MCF 10A (cell line): ENCODE measurements at regions of chr4 and their contacts with region 1.

Region 1: DNA sequence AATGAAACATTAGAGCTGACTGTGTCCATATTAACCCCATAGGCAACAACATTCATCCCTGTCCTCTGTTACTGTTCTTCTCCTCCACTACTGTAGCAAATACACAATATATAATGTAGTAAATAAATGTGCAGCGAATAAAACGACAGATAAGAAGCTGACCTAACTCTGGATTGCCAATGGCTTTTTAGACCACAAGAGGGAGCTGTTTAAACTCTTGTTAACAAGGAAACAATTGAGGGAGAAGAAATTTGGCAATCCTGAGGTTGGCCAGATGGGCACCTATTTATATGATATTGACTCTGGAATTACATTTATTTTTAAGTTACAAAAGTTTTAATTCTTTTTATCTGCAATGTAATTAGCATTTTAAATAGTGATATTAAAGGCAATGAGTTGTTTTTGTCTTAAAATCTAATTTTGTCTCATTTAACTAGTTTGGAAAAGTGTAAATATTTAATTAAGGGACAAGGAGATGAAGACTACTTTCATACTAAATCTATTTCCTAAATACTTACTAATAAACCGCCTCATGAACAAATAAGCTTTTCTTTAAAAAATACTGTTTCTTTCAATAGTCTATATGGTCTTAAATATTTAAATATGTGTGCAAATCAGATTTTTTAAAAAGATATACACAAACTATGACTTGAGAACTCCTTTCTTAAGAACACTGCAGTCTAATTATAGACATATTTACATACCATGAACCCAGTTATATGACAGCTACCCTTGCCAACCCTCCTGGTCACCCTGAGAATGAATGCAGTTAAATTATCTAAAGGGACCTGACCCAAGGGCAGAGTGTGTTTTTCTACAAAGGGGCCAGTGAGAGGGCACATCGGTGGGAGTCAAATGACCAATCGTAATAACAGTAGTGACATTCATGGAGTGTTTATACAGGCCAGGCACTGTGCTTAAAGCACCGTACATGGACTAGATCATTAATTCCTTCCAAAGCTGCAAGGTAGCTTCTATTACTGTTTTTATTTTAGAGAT is 52.9 kb upstream of the HPF1 start:
- DNase-seq: peak; percentile 86
- H3K4me3 Mint-ChIP-seq: no peak overlapping the region
- H3K27ac Mint-ChIP-seq: no peak overlapping the region
- H3K4me1 Mint-ChIP-seq: no peaks in the 10 kb centered on the region
- H3K27me3 Mint-ChIP-seq: no peaks in the 10 kb centered on the region
- CTCF ChIP-seq: peak; percentile 64

Region 2: DNA sequence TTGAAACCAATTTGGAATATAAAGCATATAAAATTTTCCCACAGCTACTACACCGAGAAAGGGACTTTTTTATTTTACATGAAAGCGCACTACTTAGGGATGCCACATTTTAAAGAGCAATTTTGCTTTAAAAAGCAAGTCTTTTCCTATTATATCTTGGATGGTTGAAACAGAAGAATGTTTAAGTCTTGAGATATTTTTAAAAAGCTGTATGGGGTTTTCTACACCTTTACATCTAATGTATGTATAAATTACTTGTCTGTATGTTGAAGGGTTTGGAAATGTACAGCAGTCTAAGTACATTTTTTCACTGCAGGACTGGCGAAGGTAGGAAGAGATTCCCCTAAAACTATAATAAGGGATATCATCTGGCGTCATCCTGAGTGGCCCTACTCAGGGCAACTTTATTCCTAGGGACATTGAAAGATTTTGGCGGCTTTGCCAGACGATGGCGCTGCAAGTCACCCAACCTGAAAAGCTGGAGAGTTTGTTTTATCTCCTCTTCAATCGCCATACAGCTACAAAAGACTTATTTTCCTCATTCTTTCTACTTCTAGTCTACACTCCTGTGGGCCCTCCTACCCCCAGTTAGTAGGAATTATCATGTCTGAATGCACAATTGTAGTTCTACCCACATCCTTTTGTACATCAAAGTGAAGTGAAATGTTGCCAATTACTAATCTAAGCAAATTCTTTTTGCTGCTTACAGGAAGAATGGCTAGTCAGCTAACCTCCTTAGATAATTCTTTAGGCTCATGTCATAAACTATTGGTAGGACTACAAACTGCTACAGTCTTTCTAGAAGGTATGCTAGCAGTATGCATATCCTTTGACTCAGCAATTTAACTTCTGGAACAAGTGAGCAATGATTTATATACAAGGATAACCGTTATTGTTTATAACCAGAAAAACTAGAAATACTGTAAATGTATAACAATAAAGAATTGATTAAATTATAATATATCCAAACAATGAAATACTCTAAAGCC is 197.5 kb before region 1 on chr4:
- CTCF ChIA-PET with region 1: interaction called, 10 read pairs
- POLR2A ChIA-PET with region 1: no interaction called
- intact Hi-C with region 1: loop called (anchors 1 kb)
- DNase-seq: peak; percentile 81
- H3K4me3 Mint-ChIP-seq: peak overlapping the region; percentile 98
- H3K27ac Mint-ChIP-seq: peak overlapping the region; percentile 98
- H3K4me1 Mint-ChIP-seq: peaks cover 12% of the 10 kb centered on the region
- H3K27me3 Mint-ChIP-seq: no peaks in the 10 kb centered on the region
- CTCF ChIP-seq: peak; percentile 56

Region 3: GRCh38 chr4:169800541-169800940 is 10.1 kb before region 1 on chr4:
- CTCF ChIA-PET with region 1: interaction called, 12 read pairs
- POLR2A ChIA-PET with region 1: no interaction called
- intact Hi-C with region 1: no loop called
- DNase-seq: no peak
- H3K4me3 Mint-ChIP-seq: no peak overlapping the region
- H3K27ac Mint-ChIP-seq: no peak overlapping the region
- H3K4me1 Mint-ChIP-seq: peaks cover 3% of the 10 kb centered on the region
- H3K27me3 Mint-ChIP-seq: no peaks in the 10 kb centered on the region
- CTCF ChIP-seq: no peak

Region 4: GRCh38 chr4:169846396-169846795 is 35.8 kb after region 1 on chr4:
- CTCF ChIA-PET with region 1: interaction called, 14 read pairs
- POLR2A ChIA-PET with region 1: no interaction called
- intact Hi-C with region 1: no loop called
- DNase-seq: no peak
- H3K4me3 Mint-ChIP-seq: no peak overlapping the region
- H3K27ac Mint-ChIP-seq: no peak overlapping the region
- H3K4me1 Mint-ChIP-seq: peaks cover 5% of the 10 kb centered on the region
- H3K27me3 Mint-ChIP-seq: peaks cover 10% of the 10 kb centered on the region
- CTCF ChIP-seq: no peak

Region 5: GRCh38 chr4:169985881-169986280 is 175.3 kb after region 1 on chr4:
- CTCF ChIA-PET with region 1: no interaction called
- POLR2A ChIA-PET with region 1: no interaction called
- intact Hi-C with region 1: no loop called
- DNase-seq: no peak
- H3K4me3 Mint-ChIP-seq: no peak overlapping the region
- H3K27ac Mint-ChIP-seq: no peak overlapping the region
- H3K4me1 Mint-ChIP-seq: peaks cover 4% of the 10 kb centered on the region
- H3K27me3 Mint-ChIP-seq: no peaks in the 10 kb centered on the region
- CTCF ChIP-seq: no peak

Region 6: GRCh38 chr4:170033999-170034398 is 223.4 kb after region 1 on chr4:
- CTCF ChIA-PET with region 1: interaction called, 21 read pairs
- POLR2A ChIA-PET with region 1: no interaction called
- intact Hi-C with region 1: loop called (anchors 5 kb)
- DNase-seq: no peak
- H3K4me3 Mint-ChIP-seq: no peak overlapping the region
- H3K27ac Mint-ChIP-seq: no peak overlapping the region
- H3K4me1 Mint-ChIP-seq: no peaks in the 10 kb centered on the region
- H3K27me3 Mint-ChIP-seq: no peaks in the 10 kb centered on the region
- CTCF ChIP-seq: no peak

Region 7: GRCh38 chr4:170047771-170048354 is 237.2 kb after region 1 on chr4:
- CTCF ChIA-PET with region 1: interaction called, 86 read pairs
- POLR2A ChIA-PET with region 1: interaction called, 4 read pairs
- intact Hi-C with region 1: loop called (anchors 1 kb)
- DNase-seq: peak; percentile 62
- H3K4me3 Mint-ChIP-seq: no peak overlapping the region
- H3K27ac Mint-ChIP-seq: no peak overlapping the region
- H3K4me1 Mint-ChIP-seq: no peaks in the 10 kb centered on the region
- H3K27me3 Mint-ChIP-seq: no peaks in the 10 kb centered on the region
- CTCF ChIP-seq: peak; percentile 69

Region 8: DNA sequence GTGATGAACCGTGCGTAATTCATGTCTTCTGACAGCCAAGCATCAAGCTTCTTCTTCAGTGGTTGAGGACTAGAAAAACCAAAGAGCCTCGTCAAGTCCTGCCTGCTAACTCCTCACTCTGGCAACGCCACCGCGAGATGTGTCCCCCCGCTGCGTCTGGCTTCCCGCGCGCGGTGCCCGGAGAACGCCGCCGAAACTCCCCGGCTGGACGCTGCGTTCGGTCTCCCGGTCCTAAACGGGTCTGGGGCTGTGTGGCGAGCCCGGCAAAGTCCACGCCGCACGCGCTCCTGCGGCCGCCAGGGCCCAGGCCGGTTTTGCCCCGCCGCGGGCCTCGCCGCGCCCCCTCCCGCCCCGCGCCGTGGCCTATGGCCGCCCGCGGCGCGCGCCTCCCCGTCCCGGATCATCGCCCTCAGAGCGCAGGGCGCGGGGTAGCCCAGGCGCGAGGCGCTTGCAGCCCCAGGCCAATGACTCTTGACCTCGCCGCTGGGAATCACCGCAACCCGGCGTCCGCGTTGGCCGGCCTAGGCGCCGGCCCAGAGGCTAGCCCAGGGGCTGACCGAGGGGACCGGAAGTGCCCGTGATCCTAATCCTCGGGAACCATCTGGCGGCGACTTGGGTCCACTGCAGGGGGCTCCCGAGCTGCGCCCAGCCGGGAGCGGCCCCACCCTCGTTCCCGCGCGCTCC is 279.2 kb after region 1 on chr4 and contains the start of gene AADAT:
- CTCF ChIA-PET with region 1: interaction called, 18 read pairs
- POLR2A ChIA-PET with region 1: no interaction called
- intact Hi-C with region 1: loop called (anchors 1 kb)
- DNase-seq: peak; percentile 81
- H3K4me3 Mint-ChIP-seq: peak within 1 kb of the TSS; percentile 81
- H3K27ac Mint-ChIP-seq: peak within 1 kb of the TSS; percentile 61
- H3K4me1 Mint-ChIP-seq: peaks cover 6% of the 10 kb centered on the region
- H3K27me3 Mint-ChIP-seq: no peaks in the 10 kb centered on the region
- CTCF ChIP-seq: peak; percentile 86
- total RNA-seq, gene AADAT: 6.4 and 6.9 TPM in 2 replicates